ENCODE measurements at regions of chr22 and their contacts with region 1.

Region 1: DNA sequence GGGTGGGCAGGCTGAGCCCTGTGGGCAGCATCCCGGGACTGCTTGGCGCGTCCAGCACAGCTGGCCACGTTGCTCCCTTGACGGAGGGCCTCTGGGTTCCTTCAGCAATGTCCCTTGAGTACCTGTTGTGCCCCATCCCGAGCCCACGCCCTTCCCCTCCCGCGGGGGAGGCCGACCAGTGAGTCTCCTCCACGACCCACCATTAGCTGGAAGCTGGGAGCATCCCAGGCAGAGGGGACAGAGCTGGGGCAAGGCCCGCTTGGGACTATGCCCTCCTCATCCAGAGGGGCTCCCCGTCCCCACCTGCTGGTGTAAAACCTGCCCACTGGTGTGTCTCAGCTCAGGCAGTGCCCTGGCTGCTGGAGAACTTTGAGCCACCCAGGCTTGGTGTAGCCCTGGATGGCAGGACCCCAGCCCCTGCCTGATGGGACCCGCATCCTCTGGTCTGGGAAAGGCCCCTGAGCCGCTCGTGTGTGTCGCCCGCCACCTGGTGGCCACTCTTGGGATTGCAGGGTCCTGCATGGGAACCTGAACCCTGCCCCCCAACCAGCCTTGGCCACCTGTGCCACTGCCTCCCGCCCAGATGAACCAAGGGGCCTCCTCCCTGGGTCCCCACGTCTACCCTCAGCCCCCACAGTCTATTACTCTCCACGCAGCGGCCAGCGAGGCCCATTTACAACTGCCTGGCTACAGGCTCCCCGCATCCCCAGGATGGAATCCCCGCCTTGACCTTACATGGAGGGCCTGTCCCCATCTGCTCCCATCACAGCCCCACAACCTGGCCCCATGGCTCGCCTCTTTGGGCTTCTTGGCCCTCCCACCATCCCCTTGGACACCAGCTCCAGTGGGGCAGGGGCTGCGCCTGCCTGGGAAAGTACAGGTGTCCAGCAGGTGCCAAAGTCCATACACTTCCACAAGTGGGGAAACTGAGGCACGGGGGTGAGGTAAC is 16.6 kb upstream of the ARHGAP8 start:
- DNase-seq: peak; percentile 51 to 95
- H3K4me3 ChIP-seq: no peak overlapping the region
- CTCF ChIP-seq: peak in 1 of 3 donors; percentile 93
- POLR2A ChIP-seq: no peak

Region 2: DNA sequence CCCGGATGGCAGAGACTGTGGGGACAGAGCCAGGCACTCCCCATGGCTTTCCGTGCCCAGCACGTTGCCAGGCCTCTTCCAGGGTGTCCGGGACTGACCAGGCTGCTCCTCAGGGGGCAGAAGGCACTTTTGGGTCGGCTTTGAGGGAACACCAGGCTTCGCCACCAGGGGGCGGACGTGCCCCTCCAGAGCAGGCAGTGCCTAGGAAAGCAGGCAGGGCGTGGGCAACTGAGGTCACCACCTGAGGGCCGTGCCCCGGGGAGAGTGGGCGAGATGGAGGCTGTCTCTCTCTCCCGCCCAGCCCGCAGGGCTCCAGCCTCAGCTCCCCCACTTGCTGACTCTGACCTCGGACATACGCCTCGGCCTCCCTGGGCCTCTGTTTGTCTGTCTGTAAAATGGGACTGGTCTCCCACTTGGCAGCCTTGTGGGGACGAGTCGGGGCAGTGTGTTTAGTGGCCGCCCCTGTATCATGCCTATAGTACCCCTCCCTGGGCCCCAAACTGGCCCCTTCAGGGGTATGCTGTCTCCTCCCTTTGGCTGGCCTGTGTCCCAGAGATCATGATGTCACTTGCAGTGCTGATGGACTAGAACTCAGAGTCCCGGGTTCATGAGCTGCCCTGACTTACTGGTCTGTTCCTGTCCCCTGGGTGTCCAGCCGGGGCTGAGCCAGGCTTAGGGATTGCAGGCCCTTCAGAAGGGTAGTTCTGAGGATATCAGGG is 38.2 kb before region 1 on chr22:
- intact Hi-C with region 1: loop called (anchors 5 kb)
- DNase-seq: peak; percentile 69 to 96
- H3K4me3 ChIP-seq: no peak overlapping the region
- CTCF ChIP-seq: peak in 1 of 3 donors; percentile 59
- POLR2A ChIP-seq: no peak